PC-9 (cell line): ENCODE measurements at regions of chr13 and their contacts with region 1.

Region 1: GRCh38 chr13:94079876-94080275 is 399.6 kb downstream of the DCT start:
- DNase-seq: no peak
- H3K4me3 ChIP-seq: no peak overlapping the region
- H3K27ac ChIP-seq: no peak overlapping the region
- H3K4me1 ChIP-seq: no peaks in the 10 kb centered on the region
- H3K27me3 ChIP-seq: no peaks in the 10 kb centered on the region
- CTCF ChIP-seq: no peak

Region 2: DNA sequence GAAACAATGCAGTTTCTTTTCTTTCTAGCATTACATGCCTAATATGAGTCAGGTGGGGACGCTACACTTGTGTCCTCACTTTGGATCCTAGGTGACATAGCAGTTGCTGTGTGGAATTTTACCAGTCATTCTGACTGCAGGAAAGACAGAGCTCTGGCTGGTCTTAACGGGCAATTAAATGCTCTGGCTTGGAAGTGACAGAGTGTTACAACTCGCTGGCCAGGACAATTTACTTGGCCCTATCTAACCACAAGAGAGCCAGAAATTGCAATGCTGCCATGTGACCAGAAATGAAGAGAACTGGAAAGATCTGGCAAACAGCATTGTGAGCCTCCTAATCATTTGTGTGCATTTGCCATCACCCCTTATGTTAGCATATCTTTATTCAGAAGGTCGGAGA is 48.6 kb after region 1 on chr13:
- CTCF ChIA-PET with region 1: no interaction called
- POLR2A ChIA-PET with region 1: no interaction called
- intact Hi-C with region 1: loop called (anchors 2 kb)
- DNase-seq: no peak
- H3K4me3 ChIP-seq: no peak overlapping the region
- H3K27ac ChIP-seq: no peak overlapping the region
- H3K4me1 ChIP-seq: no peaks in the 10 kb centered on the region
- H3K27me3 ChIP-seq: no peaks in the 10 kb centered on the region
- CTCF ChIP-seq: no peak